Naive thymus-derived CD4-positive, alpha-beta T cell (primary cell): ENCODE measurements at regions of chr12 and their contacts with region 1.

Region 1: DNA sequence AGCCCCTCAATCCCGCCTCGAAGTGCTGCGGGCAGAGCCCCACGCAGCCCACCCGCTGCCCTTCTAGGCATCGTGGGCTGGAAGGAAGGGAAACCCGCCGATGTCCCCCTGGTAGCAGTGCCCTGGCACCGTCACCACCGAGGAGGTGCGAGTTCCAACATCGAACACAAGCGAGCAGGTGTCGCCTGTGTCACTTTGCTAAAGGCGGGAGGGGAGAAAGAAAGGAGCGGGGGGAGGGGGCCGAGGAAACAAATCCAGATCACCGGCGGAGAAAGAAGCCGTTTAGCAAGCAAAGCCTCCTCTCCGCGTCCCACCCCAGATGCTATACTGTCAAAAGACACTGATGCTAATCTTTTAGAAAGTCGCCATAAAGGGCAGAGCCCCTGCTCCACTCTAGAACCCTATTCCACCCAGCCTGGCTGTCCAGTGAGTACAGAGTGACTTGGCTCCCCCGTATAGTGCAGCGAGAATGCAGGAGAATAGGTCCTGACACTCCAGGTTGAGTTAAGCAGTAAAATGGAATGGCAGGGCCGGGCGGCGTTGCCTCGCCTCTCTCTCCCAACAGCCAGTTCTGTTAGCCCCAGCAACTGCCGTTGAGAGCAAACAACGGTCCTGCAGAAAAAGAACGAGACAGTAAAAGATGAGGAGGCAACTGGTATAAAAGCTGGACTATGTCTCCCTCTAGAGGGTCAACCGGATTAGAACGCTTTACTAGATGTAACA is 67.9 kb upstream of the USP15 start:
- DNase-seq: peak; percentile 14 to 85 (median 72)
- ATAC-seq: peak; percentile 92
- H3K4me3 ChIP-seq: peak overlapping the region; percentile 40
- H3K4me3 Mint-ChIP-seq: peak overlapping the region; percentile 84 to 95 (median 90)
- H3K27ac ChIP-seq: no peak overlapping the region
- H3K27ac Mint-ChIP-seq: peak overlapping the region in 2 of 9 donors; percentile 9 to 63
- H3K4me1 ChIP-seq: peaks cover 22 to 23% of the 10 kb centered on the region in 2 donors
- H3K4me1 Mint-ChIP-seq: peaks cover 8 to 27% (median 24%) of the 10 kb centered on the region in 7 donors
- H3K27me3 ChIP-seq: peaks cover 12 to 19% of the 10 kb centered on the region in 2 donors
- H3K27me3 Mint-ChIP-seq: peaks cover 25 to 80% (median 39%) of the 10 kb centered on the region in 5 donors

Region 2: DNA sequence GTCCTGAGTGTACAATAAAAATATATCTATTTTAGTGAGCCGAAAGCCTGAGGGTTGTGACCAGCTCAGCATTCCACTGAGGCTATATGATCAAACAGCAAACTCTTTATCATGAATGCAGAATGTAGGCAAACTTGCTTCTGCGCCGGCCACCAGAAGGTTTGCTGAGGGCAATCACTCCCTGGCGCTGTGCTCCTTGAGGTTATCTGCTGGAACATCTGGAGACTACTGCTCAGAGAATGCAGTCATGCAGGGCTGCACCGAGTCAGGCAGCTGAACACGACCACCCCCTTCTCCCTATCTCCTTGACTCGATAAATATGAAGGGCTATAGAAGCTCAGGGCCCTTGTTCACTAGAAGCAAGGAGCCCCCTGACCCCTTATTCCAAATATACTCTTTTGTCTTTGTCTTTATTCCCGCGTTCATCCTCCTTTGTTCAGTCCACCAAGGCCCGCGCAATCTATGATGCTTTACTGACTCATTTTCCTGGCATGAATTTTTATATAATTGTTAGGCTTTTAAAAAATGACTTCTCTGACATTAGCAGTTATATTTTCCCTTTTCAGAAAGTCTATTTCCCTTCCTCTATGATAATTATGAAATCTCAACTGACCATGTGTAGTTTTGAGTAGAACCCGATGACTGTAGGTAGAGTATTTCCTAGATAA is 1507.2 kb before region 1 on chr12:
- CTCF ChIA-PET with region 1: no interaction called
- POLR2A ChIA-PET with region 1: no interaction called
- intact Hi-C with region 1: loop called in 1 of 2 experiments (anchors 1 kb)
- DNase-seq: no peak
- ATAC-seq: no peak
- H3K4me3 ChIP-seq: no peak overlapping the region
- H3K4me3 Mint-ChIP-seq: no peak overlapping the region
- H3K27ac ChIP-seq: no peak overlapping the region
- H3K27ac Mint-ChIP-seq: no peak overlapping the region
- H3K4me1 ChIP-seq: no peaks in the 10 kb centered on the region
- H3K4me1 Mint-ChIP-seq: no peaks in the 10 kb centered on the region
- H3K27me3 ChIP-seq: no peaks in the 10 kb centered on the region
- H3K27me3 Mint-ChIP-seq: peaks cover 0 to 1% (median 0%) of the 10 kb centered on the region in 5 donors

Region 3: DNA sequence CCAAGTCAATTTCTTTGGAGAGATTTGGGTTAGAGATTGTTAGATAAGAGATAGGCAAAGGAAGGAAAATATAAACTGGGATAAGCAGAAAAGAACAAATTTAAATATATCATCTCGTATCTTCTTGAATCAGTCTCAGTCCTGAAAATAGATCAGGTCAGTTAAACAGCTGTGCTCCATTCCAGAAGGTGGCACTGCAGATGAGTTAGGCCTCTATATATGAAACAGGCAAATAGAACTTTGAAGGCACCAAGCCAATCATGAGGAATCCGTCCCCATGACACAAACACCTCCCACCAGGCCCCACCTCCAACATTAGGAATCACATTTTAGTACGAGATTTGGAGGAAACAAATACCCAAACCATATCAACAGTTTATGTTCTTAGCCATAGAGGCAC is 537.6 kb before region 1 on chr12:
- CTCF ChIA-PET with region 1: no interaction called
- POLR2A ChIA-PET with region 1: no interaction called
- intact Hi-C with region 1: loop called in 1 of 2 experiments (anchors 1 kb)
- DNase-seq: no peak
- ATAC-seq: no peak
- H3K4me3 ChIP-seq: no peak overlapping the region
- H3K4me3 Mint-ChIP-seq: no peak overlapping the region
- H3K27ac ChIP-seq: no peak overlapping the region
- H3K27ac Mint-ChIP-seq: no peak overlapping the region
- H3K4me1 ChIP-seq: no peaks in the 10 kb centered on the region
- H3K4me1 Mint-ChIP-seq: no peaks in the 10 kb centered on the region
- H3K27me3 ChIP-seq: peaks cover 0 to 3% of the 10 kb centered on the region in 2 donors
- H3K27me3 Mint-ChIP-seq: no peaks in the 10 kb centered on the region

Region 4: GRCh38 chr12:61713121-61713520 is 479.2 kb before region 1 on chr12:
- CTCF ChIA-PET with region 1: no interaction called
- POLR2A ChIA-PET with region 1: no interaction called
- intact Hi-C with region 1: no loop called
- DNase-seq: no peak
- ATAC-seq: no peak
- H3K4me3 ChIP-seq: no peak overlapping the region
- H3K4me3 Mint-ChIP-seq: no peak overlapping the region
- H3K27ac ChIP-seq: no peak overlapping the region
- H3K27ac Mint-ChIP-seq: no peak overlapping the region
- H3K4me1 ChIP-seq: no peaks in the 10 kb centered on the region
- H3K4me1 Mint-ChIP-seq: no peaks in the 10 kb centered on the region
- H3K27me3 ChIP-seq: no peaks in the 10 kb centered on the region
- H3K27me3 Mint-ChIP-seq: no peaks in the 10 kb centered on the region

Region 5: GRCh38 chr12:61993734-61994345 is 198.5 kb before region 1 on chr12:
- CTCF ChIA-PET with region 1: no interaction called
- POLR2A ChIA-PET with region 1: no interaction called
- intact Hi-C with region 1: loop called in 1 of 2 experiments (anchors 5 kb)
- DNase-seq: peak in 3 of 9 donors; percentile 1 to 19 (median 8)
- ATAC-seq: peak; percentile 78
- H3K4me3 ChIP-seq: no peak overlapping the region
- H3K4me3 Mint-ChIP-seq: no peak overlapping the region
- H3K27ac ChIP-seq: no peak overlapping the region
- H3K27ac Mint-ChIP-seq: no peak overlapping the region
- H3K4me1 ChIP-seq: no peaks in the 10 kb centered on the region
- H3K4me1 Mint-ChIP-seq: no peaks in the 10 kb centered on the region
- H3K27me3 ChIP-seq: no peaks in the 10 kb centered on the region
- H3K27me3 Mint-ChIP-seq: peaks cover 0 to 11% (median 6%) of the 10 kb centered on the region in 5 donors

Region 6: GRCh38 chr12:62123721-62124203 is 68.6 kb before region 1 on chr12:
- CTCF ChIA-PET with region 1: interaction called, 8 read pairs
- POLR2A ChIA-PET with region 1: no interaction called
- intact Hi-C with region 1: loop called (anchors 1 kb)
- DNase-seq: peak in 7 of 9 donors; percentile 8 to 49 (median 30)
- ATAC-seq: peak; percentile 77
- H3K4me3 ChIP-seq: no peak overlapping the region
- H3K4me3 Mint-ChIP-seq: no peak overlapping the region
- H3K27ac ChIP-seq: no peak overlapping the region
- H3K27ac Mint-ChIP-seq: peak overlapping the region in 1 of 9 donors; percentile 27
- H3K4me1 ChIP-seq: no peaks in the 10 kb centered on the region
- H3K4me1 Mint-ChIP-seq: peaks cover 0 to 6% (median 0%) of the 10 kb centered on the region in 7 donors
- H3K27me3 ChIP-seq: no peaks in the 10 kb centered on the region
- H3K27me3 Mint-ChIP-seq: peaks cover 0 to 17% (median 4%) of the 10 kb centered on the region in 5 donors

Region 7: GRCh38 chr12:62170241-62170640 is 22.1 kb before region 1 on chr12:
- CTCF ChIA-PET with region 1: no interaction called
- POLR2A ChIA-PET with region 1: no interaction called
- intact Hi-C with region 1: no loop called
- DNase-seq: no peak
- ATAC-seq: no peak
- H3K4me3 ChIP-seq: no peak overlapping the region
- H3K4me3 Mint-ChIP-seq: no peak overlapping the region
- H3K27ac ChIP-seq: no peak overlapping the region
- H3K27ac Mint-ChIP-seq: no peak overlapping the region
- H3K4me1 ChIP-seq: no peaks in the 10 kb centered on the region
- H3K4me1 Mint-ChIP-seq: peaks cover 0 to 5% (median 0%) of the 10 kb centered on the region in 7 donors
- H3K27me3 ChIP-seq: no peaks in the 10 kb centered on the region
- H3K27me3 Mint-ChIP-seq: peaks cover 0 to 9% (median 5%) of the 10 kb centered on the region in 5 donors

Region 8: GRCh38 chr12:62210422-62210821 is 18.1 kb after region 1 on chr12:
- CTCF ChIA-PET with region 1: interaction called, 5 read pairs
- POLR2A ChIA-PET with region 1: no interaction called
- intact Hi-C with region 1: loop called in 1 of 2 experiments (anchors 1 kb)
- DNase-seq: peak in 5 of 9 donors; percentile 34 to 47 (median 43)
- ATAC-seq: peak; percentile 60
- H3K4me3 ChIP-seq: no peak overlapping the region
- H3K4me3 Mint-ChIP-seq: peak overlapping the region in 4 of 10 donors; percentile 3 to 30 (median 4)
- H3K27ac ChIP-seq: no peak overlapping the region
- H3K27ac Mint-ChIP-seq: peak overlapping the region in 1 of 9 donors; percentile 4
- H3K4me1 ChIP-seq: peaks cover 0 to 11% of the 10 kb centered on the region in 2 donors
- H3K4me1 Mint-ChIP-seq: peaks cover 14 to 39% (median 29%) of the 10 kb centered on the region in 7 donors
- H3K27me3 ChIP-seq: no peaks in the 10 kb centered on the region
- H3K27me3 Mint-ChIP-seq: peaks cover 0 to 14% (median 0%) of the 10 kb centered on the region in 5 donors